A549 (cell line): ENCODE measurements at regions of chr5 and their contacts with region 1.

Region 1: DNA sequence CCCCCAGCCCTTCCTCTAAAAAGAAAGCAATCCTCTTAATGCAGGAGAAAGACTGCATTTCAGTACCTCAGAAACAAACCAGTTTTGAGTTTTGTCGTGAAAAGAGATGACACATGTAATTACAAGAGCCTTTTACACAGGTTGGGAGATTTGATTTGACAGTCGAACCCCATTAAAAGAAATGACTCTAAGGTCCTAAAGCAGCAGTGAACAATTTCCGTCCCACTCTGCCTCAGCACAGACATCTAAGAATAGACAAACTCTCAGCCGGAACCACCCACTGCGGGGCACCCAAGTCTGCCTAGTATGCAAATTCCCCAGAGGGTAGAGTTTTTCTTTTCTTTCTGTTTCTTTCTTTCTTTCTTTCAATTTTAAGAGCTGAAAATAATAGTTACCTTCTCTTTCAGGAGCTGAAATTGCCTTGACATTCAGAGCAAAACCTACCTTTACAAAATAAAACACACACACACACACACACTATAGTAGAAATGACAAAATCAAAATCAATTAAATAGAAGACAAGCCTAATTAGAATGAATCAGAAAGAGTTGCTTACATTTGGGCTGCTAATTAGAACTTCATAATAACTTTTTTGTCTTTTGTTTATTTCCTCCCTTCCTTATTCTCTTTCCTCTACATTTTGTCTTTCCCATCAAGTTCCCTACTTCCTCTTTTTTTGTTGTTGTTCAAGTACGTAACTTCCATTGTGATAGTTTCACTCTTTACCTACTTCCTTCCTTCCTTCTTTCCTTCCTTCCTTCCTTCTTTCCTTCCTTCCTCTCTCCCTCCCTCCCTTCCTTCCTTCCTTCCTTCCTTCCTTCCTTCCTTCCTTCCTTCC is 65.1 kb downstream of the BASP1 start:
- DNase-seq: no peak
- ATAC-seq: peak in 1 of 2 experiments; percentile 33; a peak in 3 of 6 replicates
- H3K4me3 ChIP-seq: no peak overlapping the region
- H3K27ac ChIP-seq: peak overlapping the region; percentile 5 to 47; a peak in 3 of 6 replicates
- H3K4me1 ChIP-seq: peaks cover 54% of the 10 kb centered on the region
- CTCF ChIP-seq: no peak
- EP300 ChIP-seq: no peak
- POLR2A ChIP-seq: no peak
- RAD21 ChIP-seq: no peak

Region 2: GRCh38 chr5:17294639-17295311 is 12.3 kb after region 1 on chr5:
- CTCF ChIA-PET with region 1: interaction called, 4 read pairs
- POLR2A ChIA-PET with region 1: interaction called, 10 read pairs
- DNase-seq: no peak
- ATAC-seq: no peak
- H3K4me3 ChIP-seq: no peak overlapping the region
- H3K27ac ChIP-seq: peak overlapping the region in 1 of 2 experiments; percentile 53; a peak in 2 of 6 replicates
- H3K4me1 ChIP-seq: no peaks in the 10 kb centered on the region
- CTCF ChIP-seq: no peak
- EP300 ChIP-seq: no peak
- POLR2A ChIP-seq: no peak
- RAD21 ChIP-seq: no peak